ENCODE measurements at regions of chrX and their contacts with region 1.

Region 1: GRCh38 chrX:154730253-154730891 is 20.5 kb downstream of the GAB3 start:
- DNase-seq: no peak
- ATAC-seq: peak; percentile 32 to 51
- H3K4me3 ChIP-seq: no peak overlapping the region
- H3K27ac ChIP-seq: peak overlapping the region; percentile 27 to 70 (median 57)
- H3K4me1 ChIP-seq: peaks cover 52% of the 10 kb centered on the region in 2 donors
- H3K27me3 ChIP-seq: no peaks in the 10 kb centered on the region
- CTCF ChIP-seq: no peak
- POLR2A ChIP-seq: no peak

Region 2: GRCh38 chrX:154750301-154751202 is 20.2 kb after region 1 on chrX and contains the start of gene GAB3:
- in situ Hi-C with region 1: no loop called
- intact Hi-C with region 1: loop called (anchors 2 kb)
- DNase-seq: no peak
- ATAC-seq: peak; percentile 49 to 53
- H3K4me3 ChIP-seq: peak within 1 kb of the TSS; percentile 47 to 60 (median 59)
- H3K27ac ChIP-seq: peak within 1 kb of the TSS; percentile 63 to 69 (median 67)
- H3K4me1 ChIP-seq: no peaks in the 10 kb centered on the region
- H3K27me3 ChIP-seq: peaks cover 0 to 7% (median 0%) of the 10 kb centered on the region in 3 donors
- CTCF ChIP-seq: no peak
- POLR2A ChIP-seq: no peak
- total RNA-seq, gene GAB3: 0.92 to 2.2 (median 1.1) TPM

Measured in gastrocnemius medialis (tissue), 4 donors.